ENCODE measurements at regions of chr11 and their contacts with region 1.

Region 1: GRCh38 chr11:125141686-125142535 is 22.6 kb upstream of the PKNOX2 start:
- DNase-seq: no peak
- H3K4me3 ChIP-seq: no peak overlapping the region
- H3K27ac ChIP-seq: no peak overlapping the region
- H3K27me3 ChIP-seq: peaks cover 10% of the 10 kb centered on the region
- CTCF ChIP-seq: peak; percentile 97

Region 2: GRCh38 chr11:124970925-124971324 is 171.0 kb before region 1 on chr11:
- CTCF ChIA-PET with region 1: interaction called, 12 read pairs
- POLR2A ChIA-PET with region 1: no interaction called
- DNase-seq: no peak
- H3K4me3 ChIP-seq: no peak overlapping the region
- H3K27ac ChIP-seq: no peak overlapping the region
- H3K27me3 ChIP-seq: no peaks in the 10 kb centered on the region
- CTCF ChIP-seq: no peak

Region 3: GRCh38 chr11:125001079-125001778 is 140.7 kb before region 1 on chr11:
- CTCF ChIA-PET with region 1: no interaction called
- POLR2A ChIA-PET with region 1: no interaction called
- DNase-seq: no peak
- H3K4me3 ChIP-seq: no peak overlapping the region
- H3K27ac ChIP-seq: no peak overlapping the region
- H3K27me3 ChIP-seq: no peaks in the 10 kb centered on the region
- CTCF ChIP-seq: no peak

Region 4: GRCh38 chr11:125105926-125106325 is 36.0 kb before region 1 on chr11:
- CTCF ChIA-PET with region 1: interaction called, 30 read pairs
- POLR2A ChIA-PET with region 1: no interaction called
- DNase-seq: no peak
- H3K4me3 ChIP-seq: no peak overlapping the region
- H3K27ac ChIP-seq: no peak overlapping the region
- H3K27me3 ChIP-seq: no peaks in the 10 kb centered on the region
- CTCF ChIP-seq: no peak

Region 5: GRCh38 chr11:125117429-125117828 is 24.5 kb before region 1 on chr11:
- CTCF ChIA-PET with region 1: interaction called, 17 read pairs
- POLR2A ChIA-PET with region 1: no interaction called
- DNase-seq: no peak
- H3K4me3 ChIP-seq: no peak overlapping the region
- H3K27ac ChIP-seq: no peak overlapping the region
- H3K27me3 ChIP-seq: peaks cover 5% of the 10 kb centered on the region
- CTCF ChIP-seq: no peak

Region 6: DNA sequence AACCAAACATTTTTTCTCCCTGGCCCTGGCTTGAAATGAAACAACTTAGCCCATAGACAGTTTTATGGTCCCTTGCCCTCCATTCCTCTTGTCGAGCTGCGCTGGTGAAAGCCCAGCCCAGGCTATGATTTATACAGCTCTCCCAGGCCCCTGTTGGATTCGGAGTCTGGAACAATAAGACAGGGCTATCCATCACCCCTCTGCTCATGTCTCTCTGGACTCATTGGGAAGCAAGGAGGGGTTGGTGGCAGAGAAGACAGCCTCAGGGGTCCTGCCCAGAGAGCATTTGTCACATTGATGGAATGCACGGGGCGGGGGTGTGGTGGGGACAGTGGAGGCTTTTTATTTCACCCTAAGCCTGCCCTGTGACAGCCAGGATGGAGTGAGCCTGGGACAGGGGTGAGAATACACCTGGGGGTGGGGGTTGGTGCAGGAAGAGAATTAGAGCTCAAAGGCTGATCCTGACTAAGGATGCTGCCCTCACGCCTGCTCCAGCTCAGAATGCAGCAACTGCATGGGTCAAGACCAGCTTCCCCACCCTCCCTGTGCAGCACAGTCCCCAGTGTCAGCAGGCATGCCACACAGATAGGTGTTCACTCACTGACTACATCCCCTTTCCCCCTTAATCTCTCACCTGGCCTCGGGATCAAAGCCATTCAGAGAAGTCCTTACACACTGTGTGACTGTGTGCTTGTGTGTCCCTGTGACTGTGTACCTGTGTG is 12.6 kb after region 1 on chr11:
- CTCF ChIA-PET with region 1: interaction called, 11 read pairs
- POLR2A ChIA-PET with region 1: no interaction called
- DNase-seq: no peak
- H3K4me3 ChIP-seq: no peak overlapping the region
- H3K27ac ChIP-seq: no peak overlapping the region
- H3K27me3 ChIP-seq: peaks cover 22% of the 10 kb centered on the region
- CTCF ChIP-seq: no peak

Region 7: DNA sequence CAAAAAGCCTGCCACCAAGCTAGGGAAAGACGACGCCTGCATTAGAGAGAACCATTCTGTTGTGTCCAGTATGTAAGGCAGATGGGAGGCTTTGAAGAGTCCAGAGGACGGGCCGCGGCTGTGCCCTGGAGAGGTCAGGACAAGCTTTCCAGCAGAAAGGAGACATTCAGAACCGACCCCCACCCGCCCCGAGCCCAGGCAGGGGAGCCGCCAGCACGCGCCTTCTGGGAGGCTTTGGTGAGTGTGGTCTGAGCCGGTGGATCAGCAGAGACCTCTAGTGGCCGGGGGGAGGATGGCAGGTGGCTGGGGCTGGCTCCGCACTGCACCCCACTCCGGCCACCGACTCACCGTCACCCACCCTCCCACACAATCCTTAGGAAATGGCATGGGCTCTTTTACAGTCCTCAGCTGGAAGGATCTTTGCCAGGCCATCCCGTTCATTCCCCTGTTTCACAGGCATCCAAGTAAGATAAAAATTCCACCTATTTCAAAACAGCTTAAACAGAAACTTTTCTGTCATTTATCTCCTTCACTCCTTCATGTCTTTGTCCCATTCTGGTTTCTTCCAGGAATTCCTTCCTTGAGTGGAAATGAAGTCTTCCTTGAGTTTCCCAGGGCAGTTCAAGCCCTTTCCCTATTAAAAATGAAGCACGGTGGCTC is 263.0 kb after region 1 on chr11:
- CTCF ChIA-PET with region 1: interaction called, 19 read pairs
- POLR2A ChIA-PET with region 1: no interaction called
- DNase-seq: no peak
- H3K4me3 ChIP-seq: no peak overlapping the region
- H3K27ac ChIP-seq: no peak overlapping the region
- H3K27me3 ChIP-seq: peaks cover 22% of the 10 kb centered on the region
- CTCF ChIP-seq: peak; percentile 95

Measured in AG04450 (cell line).